Gastrocnemius medialis (tissue), 4 donors: ENCODE measurements at regions of chr4 and their contacts with region 1.

Region 1: GRCh38 chr4:141307241-141307689 is 86.6 kb downstream of the ZNF330 start:
- DNase-seq: peak; percentile 17 to 51
- ATAC-seq: peak; percentile 84 to 96
- H3K4me3 ChIP-seq: no peak overlapping the region
- H3K27ac ChIP-seq: no peak overlapping the region
- H3K4me1 ChIP-seq: peaks cover 0 to 4% of the 10 kb centered on the region in 2 donors
- H3K27me3 ChIP-seq: no peaks in the 10 kb centered on the region
- CTCF ChIP-seq: peak; percentile 29 to 80 (median 62)
- POLR2A ChIP-seq: no peak

Region 2: DNA sequence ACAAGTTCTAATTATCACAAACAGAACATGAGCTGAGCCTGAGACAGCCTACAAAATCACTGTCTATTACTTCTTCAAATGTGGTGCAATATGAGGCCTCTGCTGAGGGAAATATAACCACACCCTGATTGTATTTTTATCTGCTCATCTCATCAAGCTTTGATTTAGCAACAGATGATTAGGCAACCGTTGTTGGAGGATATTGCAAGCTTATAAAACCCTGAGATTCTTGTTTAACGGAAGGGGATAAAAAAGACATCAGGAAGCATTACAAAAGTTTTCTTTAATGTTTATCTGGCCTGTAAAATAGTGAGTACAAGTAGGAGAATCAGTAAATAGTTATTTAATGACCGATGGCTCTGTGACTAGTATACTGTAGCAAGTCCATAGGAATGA is 21.9 kb after region 1 on chr4:
- in situ Hi-C with region 1: no loop called
- intact Hi-C with region 1: loop called (anchors 2 kb)
- DNase-seq: peak in 1 of 2 donors; percentile 8
- ATAC-seq: peak; percentile 95 to 98
- H3K4me3 ChIP-seq: peak overlapping the region in 2 of 4 donors; percentile 4 to 34
- H3K27ac ChIP-seq: peak overlapping the region; percentile 69 to 85 (median 74)
- H3K4me1 ChIP-seq: peaks cover 9 to 17% of the 10 kb centered on the region in 2 donors
- H3K27me3 ChIP-seq: no peaks in the 10 kb centered on the region
- CTCF ChIP-seq: no peak
- POLR2A ChIP-seq: peak in 1 of 2 donors; percentile 20

Region 3: DNA sequence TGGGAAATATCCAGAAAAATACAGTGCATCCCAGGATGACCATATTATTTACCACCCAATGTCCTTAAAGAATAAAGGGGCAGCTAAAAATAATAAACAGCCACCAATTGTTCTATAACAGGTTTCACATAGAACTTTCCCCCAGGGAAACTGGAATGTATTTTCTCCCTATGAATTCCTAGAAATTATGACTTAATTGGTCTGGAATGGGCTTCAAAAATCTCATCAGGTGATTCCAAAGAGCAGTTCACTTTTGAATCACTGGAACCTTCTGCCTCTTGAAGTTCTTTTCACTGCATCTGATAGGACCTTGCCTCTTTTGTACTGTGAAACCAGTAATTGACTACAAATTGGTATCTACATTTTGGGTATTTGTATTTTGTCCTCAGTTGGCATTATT is 32.7 kb after region 1 on chr4:
- in situ Hi-C with region 1: no loop called
- intact Hi-C with region 1: loop called (anchors 5 kb)
- DNase-seq: no peak
- ATAC-seq: no peak
- H3K4me3 ChIP-seq: no peak overlapping the region
- H3K27ac ChIP-seq: no peak overlapping the region
- H3K4me1 ChIP-seq: no peaks in the 10 kb centered on the region
- H3K27me3 ChIP-seq: no peaks in the 10 kb centered on the region
- CTCF ChIP-seq: no peak
- POLR2A ChIP-seq: no peak

Region 4: GRCh38 chr4:141425124-141425523 is 117.9 kb after region 1 on chr4:
- in situ Hi-C with region 1: no loop called
- intact Hi-C with region 1: loop called (anchors 10 kb)
- DNase-seq: no peak
- ATAC-seq: peak; percentile 98 to 100
- H3K4me3 ChIP-seq: no peak overlapping the region
- H3K27ac ChIP-seq: peak overlapping the region in 2 of 4 donors; percentile 11 to 20
- H3K4me1 ChIP-seq: peaks cover 5 to 7% of the 10 kb centered on the region in 2 donors
- H3K27me3 ChIP-seq: no peaks in the 10 kb centered on the region
- CTCF ChIP-seq: no peak
- POLR2A ChIP-seq: no peak

Region 5: GRCh38 chr4:141711014-141711610 is 403.8 kb after region 1 on chr4:
- in situ Hi-C with region 1: no loop called
- intact Hi-C with region 1: loop called (anchors 10 kb)
- DNase-seq: no peak
- ATAC-seq: no peak
- H3K4me3 ChIP-seq: no peak overlapping the region
- H3K27ac ChIP-seq: no peak overlapping the region
- H3K4me1 ChIP-seq: no peaks in the 10 kb centered on the region
- H3K27me3 ChIP-seq: no peaks in the 10 kb centered on the region
- CTCF ChIP-seq: peak in 4 of 5 experiments; percentile 27 to 46 (median 40)
- POLR2A ChIP-seq: no peak